ENCODE measurements at regions of chr22 and their contacts with region 1.

Region 1: DNA sequence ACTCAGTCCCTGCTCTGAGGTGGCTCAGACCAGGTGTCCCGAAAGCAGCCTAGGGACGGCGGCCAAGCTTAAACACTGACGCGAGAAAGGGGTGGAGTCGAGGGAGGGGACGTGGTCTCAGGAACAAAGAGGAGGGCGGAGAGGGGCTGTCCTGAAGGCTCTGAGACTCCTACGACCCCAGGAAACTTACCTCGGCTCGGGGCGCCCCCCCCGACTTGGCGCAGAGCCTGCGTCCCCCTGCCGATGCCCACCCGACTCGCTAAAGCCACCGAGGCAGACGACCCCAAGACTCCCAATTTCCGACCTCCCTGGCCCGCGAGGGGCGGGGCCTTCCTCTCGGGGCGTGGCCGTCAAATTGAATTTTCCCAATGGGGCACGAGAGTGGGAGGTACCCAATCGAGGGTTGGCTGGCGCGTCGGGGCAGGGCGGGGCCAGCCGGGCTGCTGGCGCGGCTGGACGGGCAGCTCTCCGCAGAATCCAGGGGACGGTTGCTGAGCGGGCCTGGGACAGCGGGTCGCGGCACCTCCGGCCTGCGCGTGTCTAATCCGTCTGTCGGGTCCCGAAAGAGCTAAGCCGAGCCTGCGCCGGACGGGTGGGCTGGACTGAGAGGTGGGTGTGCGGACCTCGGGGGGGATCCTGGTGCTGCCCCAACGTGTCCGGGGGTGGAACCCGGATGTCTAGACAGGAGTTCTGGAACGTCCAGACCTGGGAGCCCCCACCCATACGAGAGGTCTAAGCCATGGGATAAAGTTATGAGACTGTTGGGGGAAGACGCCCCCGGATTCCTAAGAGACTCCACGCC is at the start of gene SMTN:
- DNase-seq: peak; percentile 74 to 94 (median 85)
- ATAC-seq: peak; percentile 69
- H3K4me3 ChIP-seq: peak within 1 kb of the TSS; percentile 72
- H3K4me3 Mint-ChIP-seq: peak within 1 kb of the TSS; percentile 90
- H3K27ac ChIP-seq: no peak within 1 kb of the TSS
- H3K27ac Mint-ChIP-seq: no peak within 1 kb of the TSS
- H3K4me1 ChIP-seq: peaks cover 53% of the 10 kb centered on the region
- H3K4me1 Mint-ChIP-seq: peaks cover 33% of the 10 kb centered on the region
- H3K27me3 ChIP-seq: no peaks in the 10 kb centered on the region
- H3K27me3 Mint-ChIP-seq: no peaks in the 10 kb centered on the region
- CTCF ChIP-seq: no peak
- total RNA-seq, gene SMTN: 2.9 TPM

Region 2: GRCh38 chr22:30634471-30635233 is 446.4 kb before region 1 on chr22:
- CTCF ChIA-PET with region 1: no interaction called
- POLR2A ChIA-PET with region 1: interaction called, 6 read pairs
- intact Hi-C with region 1: loop called (anchors 1 kb)
- DNase-seq: peak; percentile 80 to 95 (median 89)
- ATAC-seq: peak; percentile 68
- H3K4me3 ChIP-seq: peak overlapping the region; percentile 68
- H3K4me3 Mint-ChIP-seq: peak overlapping the region; percentile 89
- H3K27ac ChIP-seq: peak overlapping the region; percentile 73 to 76
- H3K27ac Mint-ChIP-seq: peak overlapping the region; percentile 94
- H3K4me1 ChIP-seq: peaks cover 36% of the 10 kb centered on the region
- H3K4me1 Mint-ChIP-seq: peaks cover 28% of the 10 kb centered on the region
- H3K27me3 ChIP-seq: no peaks in the 10 kb centered on the region
- H3K27me3 Mint-ChIP-seq: no peaks in the 10 kb centered on the region
- CTCF ChIP-seq: peak; percentile 91

Region 3: DNA sequence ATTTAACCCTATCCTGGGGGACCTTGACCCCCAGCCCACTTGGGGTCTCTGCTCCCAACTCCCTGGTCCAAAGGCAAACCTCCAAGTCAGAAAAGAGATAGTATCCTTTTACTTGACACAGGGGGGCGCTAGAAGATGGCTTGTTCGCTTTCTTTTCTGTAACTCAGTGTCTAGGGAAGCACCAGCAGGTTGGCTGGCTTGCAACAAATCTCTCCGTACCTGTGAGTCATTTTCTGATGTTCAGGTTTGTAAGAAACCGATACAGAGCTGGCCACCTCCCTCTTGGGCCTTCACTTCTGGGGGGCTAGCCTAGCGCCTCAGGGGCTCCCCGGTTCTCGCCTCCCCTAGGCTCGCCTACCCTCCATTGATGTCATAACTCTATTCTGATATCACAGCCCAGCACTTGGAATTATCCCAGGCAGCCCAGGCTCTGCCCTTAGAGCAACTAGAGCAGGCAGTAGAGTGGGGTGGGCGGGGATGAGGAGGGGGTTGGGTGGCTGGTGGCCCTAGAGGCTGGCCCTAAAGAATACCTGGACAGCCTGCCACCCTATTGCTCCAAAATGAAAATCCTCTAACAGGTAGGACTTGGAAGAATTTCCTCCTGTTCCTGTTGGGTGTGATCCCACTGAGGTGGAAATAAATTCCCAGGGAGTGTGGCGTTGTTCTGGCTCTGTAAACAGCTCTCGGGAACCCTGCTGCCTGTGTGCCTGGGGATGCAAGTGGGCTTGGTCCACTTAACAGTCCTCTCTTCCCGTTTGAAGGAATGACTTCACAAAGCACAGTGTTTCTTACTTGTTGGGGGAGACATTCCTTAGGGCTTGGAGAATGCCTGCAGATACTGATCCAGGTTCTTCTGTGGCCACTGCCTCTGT is 317.0 kb before region 1 on chr22:
- CTCF ChIA-PET with region 1: interaction called, 3 read pairs
- POLR2A ChIA-PET with region 1: interaction called, 3 read pairs
- intact Hi-C with region 1: loop called (anchors 1 kb)
- DNase-seq: peak; percentile 5 to 80 (median 37)
- ATAC-seq: peak; percentile 71
- H3K4me3 ChIP-seq: no peak overlapping the region
- H3K4me3 Mint-ChIP-seq: no peak overlapping the region
- H3K27ac ChIP-seq: no peak overlapping the region
- H3K27ac Mint-ChIP-seq: no peak overlapping the region
- H3K4me1 ChIP-seq: peaks cover 4% of the 10 kb centered on the region
- H3K4me1 Mint-ChIP-seq: no peaks in the 10 kb centered on the region
- H3K27me3 ChIP-seq: no peaks in the 10 kb centered on the region
- H3K27me3 Mint-ChIP-seq: no peaks in the 10 kb centered on the region
- CTCF ChIP-seq: peak; percentile 55

Region 4: DNA sequence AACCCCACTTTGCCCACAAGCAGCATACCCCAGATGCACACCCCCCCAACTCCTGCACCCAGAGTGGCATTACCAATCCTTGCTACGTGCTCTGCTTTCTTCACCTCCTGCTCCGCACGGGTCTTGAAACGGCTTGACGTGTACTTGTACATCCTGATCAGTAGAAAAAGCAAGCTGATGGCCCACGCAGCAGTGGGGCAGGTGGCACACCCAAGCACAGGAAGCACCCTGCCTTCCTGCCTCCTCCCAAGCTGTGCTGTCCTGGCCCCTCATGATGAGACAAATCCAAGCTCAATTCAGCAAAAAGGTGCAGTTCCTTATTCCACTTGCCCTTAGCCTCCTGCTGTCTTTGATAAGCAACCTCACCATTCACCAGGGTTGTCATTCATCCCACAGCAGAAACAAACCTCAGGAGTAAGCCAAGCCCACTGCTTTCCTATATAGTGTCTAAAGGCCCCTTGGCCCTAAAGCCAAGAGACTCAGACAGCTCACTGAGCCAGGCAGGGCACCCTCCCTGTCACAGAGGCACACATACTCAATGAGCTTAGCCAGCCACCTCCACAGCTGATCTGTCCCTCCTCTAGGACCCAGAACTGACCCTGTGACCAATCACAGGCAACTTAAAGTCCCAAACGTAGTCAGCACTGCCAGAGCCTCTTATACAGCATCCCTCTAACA is 140.2 kb before region 1 on chr22:
- CTCF ChIA-PET with region 1: interaction called, 14 read pairs
- POLR2A ChIA-PET with region 1: interaction called, 22 read pairs
- intact Hi-C with region 1: no loop called
- DNase-seq: peak; percentile 25 to 83 (median 55)
- ATAC-seq: peak; percentile 77
- H3K4me3 ChIP-seq: peak overlapping the region; percentile 65
- H3K4me3 Mint-ChIP-seq: peak overlapping the region; percentile 86
- H3K27ac ChIP-seq: peak overlapping the region; percentile 59 to 70
- H3K27ac Mint-ChIP-seq: peak overlapping the region; percentile 92
- H3K4me1 ChIP-seq: peaks cover 83% of the 10 kb centered on the region
- H3K4me1 Mint-ChIP-seq: peaks cover 85% of the 10 kb centered on the region
- H3K27me3 ChIP-seq: no peaks in the 10 kb centered on the region
- H3K27me3 Mint-ChIP-seq: no peaks in the 10 kb centered on the region
- CTCF ChIP-seq: no peak

Region 5: DNA sequence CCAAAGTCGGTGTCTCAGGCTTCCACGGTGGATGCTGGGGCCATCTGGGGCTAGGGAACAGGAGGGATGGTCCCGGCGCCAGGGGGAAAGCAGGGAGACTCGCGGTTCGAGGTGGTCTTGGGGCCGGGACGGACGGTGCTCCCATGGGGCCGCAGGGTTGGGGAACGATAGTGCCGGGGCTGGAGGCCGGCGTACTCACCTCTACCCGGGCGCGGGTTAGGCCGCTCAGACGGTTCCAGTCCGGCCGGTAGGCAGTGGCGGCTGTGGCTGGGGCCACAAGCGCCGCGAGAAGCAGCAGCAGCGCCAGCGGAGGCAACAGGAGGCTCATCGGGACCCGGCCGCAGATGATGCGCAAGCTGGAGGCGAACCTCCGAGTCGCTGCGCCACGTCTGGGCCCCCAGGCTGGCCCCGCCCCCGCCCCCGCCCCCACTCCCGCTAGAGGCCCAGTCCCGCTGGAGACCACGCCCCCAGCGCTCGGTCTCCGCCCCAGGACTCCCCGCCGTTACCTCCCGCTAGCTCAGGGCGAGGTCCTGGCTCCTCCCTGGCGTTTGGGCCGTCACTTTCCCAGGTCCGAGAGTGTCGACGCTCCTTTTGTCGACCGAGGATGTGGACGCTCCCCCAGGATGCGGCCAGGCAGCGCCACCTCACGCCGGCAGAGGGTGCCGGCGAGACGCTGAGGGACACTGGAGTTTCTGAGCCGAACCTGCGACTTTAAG is 26.3 kb after region 1 on chr22 and contains the start of gene SELENOM:
- CTCF ChIA-PET with region 1: interaction called, 21 read pairs
- POLR2A ChIA-PET with region 1: interaction called, 23 read pairs
- intact Hi-C with region 1: loop called in 1 of 2 experiments (anchors 1 kb)
- DNase-seq: peak; percentile 71 to 95 (median 82)
- ATAC-seq: peak; percentile 90
- H3K4me3 ChIP-seq: peak within 1 kb of the TSS; percentile 75
- H3K4me3 Mint-ChIP-seq: peak within 1 kb of the TSS; percentile 97
- H3K27ac ChIP-seq: peak within 1 kb of the TSS; percentile 24 to 51
- H3K27ac Mint-ChIP-seq: peak within 1 kb of the TSS; percentile 87
- H3K4me1 ChIP-seq: peaks cover 31% of the 10 kb centered on the region
- H3K4me1 Mint-ChIP-seq: peaks cover 24% of the 10 kb centered on the region
- H3K27me3 ChIP-seq: no peaks in the 10 kb centered on the region
- H3K27me3 Mint-ChIP-seq: no peaks in the 10 kb centered on the region
- CTCF ChIP-seq: peak; percentile 70
- total RNA-seq, gene SELENOM: 78.0 to 82.4 TPM

Region 6: GRCh38 chr22:31155422-31155821 is 74.4 kb after region 1 on chr22:
- CTCF ChIA-PET with region 1: interaction called, 6 read pairs
- POLR2A ChIA-PET with region 1: no interaction called
- intact Hi-C with region 1: loop called in 1 of 2 experiments (anchors 5 kb)
- DNase-seq: no peak
- ATAC-seq: no peak
- H3K4me3 ChIP-seq: no peak overlapping the region
- H3K4me3 Mint-ChIP-seq: peak overlapping the region; percentile 23
- H3K27ac ChIP-seq: no peak overlapping the region
- H3K27ac Mint-ChIP-seq: no peak overlapping the region
- H3K4me1 ChIP-seq: peaks cover 7% of the 10 kb centered on the region
- H3K4me1 Mint-ChIP-seq: peaks cover 15% of the 10 kb centered on the region
- H3K27me3 ChIP-seq: peaks cover 0 to 4% of the 10 kb centered on the region in 2 experiments
- H3K27me3 Mint-ChIP-seq: no peaks in the 10 kb centered on the region
- CTCF ChIP-seq: no peak

Measured in CD4-positive, alpha-beta T cell (primary cell).